ENCODE measurements at regions of chr20 and their contacts with region 1.

Region 1: DNA sequence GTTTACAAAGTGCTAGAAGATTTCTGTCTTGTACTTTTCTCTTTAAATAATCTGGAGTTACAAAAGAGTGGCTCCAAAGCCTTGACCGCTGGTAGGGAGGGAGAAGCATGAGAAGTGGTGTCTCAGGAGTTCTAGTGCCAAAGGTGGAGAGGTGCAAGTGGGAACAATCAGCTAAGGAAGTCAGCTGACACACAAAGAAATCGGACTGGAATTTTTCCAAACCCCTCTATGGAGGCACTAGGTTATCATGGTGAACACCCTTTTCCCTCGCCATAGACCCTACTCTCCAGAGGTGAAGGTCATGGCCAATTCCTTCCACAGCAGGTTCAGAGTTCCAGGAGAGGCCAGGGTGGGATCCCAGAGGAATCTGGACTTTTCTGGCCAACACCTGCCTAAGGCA is 14.8 kb downstream of the PLAGL2 start:
- DNase-seq: no peak

Region 2: DNA sequence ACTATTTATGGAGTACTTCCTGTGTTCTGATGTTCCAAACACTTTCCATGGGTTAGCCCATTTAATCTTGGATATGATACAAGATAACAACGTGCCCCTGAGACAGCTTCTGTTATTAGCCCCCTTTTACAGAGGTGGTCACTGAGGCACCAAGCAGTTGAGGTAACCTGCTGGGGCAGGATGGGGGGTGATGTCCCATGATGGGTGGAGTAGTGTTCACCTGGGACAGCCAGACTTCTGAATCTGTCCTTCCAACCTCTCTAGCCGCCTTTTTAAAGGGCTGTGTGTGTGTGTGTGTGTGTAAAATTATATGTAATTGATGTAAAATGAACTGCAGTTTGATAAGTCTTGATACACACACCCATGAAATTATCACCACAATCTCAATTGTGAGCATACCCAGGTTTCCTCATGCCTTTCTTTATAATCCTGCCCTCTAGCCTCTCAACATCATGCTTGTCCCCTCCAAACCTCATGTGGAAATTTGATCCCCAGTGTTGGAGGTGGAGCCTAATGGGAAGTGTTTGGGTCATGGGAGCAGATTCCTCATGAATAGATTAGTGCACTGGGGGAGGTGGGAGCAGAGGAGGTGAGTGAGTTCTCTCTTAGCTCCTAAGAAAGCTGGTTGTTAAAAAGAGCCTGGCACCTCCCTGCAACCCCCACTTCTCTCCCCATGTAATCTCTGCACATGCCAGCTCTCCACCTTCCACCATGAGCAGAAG is 24.4 kb before region 1 on chr20:
- intact Hi-C with region 1: loop called in 1 of 2 experiments (anchors 1 kb)
- DNase-seq: no peak

Measured in posterior vena cava (tissue), 2 donors.